ENCODE measurements at regions of chr12 and their contacts with region 1.

Region 1: DNA sequence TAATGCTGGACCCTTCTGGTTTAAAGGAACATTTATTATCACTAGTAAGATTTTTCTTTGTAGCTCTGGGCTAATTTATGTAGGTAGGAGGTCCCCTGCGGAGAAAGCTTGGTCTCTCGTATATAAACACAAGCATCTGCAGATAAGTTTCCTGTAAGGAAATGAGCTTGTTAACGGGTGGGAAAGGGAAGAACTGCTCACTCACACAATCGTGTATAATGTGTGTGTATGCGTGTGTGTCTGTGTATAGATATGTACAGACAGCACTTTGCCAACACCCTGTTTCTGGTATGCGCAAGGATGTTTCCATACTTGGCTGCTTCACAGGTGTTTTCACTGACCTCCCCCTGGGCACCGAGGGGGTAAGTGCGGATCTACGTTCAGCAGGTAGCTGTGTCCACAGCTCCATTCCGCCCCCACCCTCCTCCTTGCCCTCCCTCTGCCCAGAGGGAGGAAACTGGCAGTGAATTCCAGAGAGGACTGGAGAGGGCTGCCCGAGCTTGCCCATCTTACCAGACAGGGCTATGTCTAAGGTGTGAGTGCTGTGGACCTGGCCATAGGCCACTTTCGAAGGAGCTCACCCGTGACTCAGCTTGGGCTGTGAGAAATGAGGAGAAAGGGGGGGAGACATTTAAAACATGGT is 65.2 kb downstream of the NINJ2 start:
- DNase-seq: peak; percentile 92
- H3K4me3 Mint-ChIP-seq: peak overlapping the region; percentile 15
- H3K27ac Mint-ChIP-seq: peak overlapping the region; percentile 18
- H3K4me1 Mint-ChIP-seq: peaks cover 20% of the 10 kb centered on the region
- H3K27me3 Mint-ChIP-seq: no peaks in the 10 kb centered on the region
- CTCF ChIP-seq: no peak

Region 2: GRCh38 chr12:480831-481816 is 116.9 kb before region 1 on chr12:
- CTCF ChIA-PET with region 1: no interaction called
- POLR2A ChIA-PET with region 1: no interaction called
- intact Hi-C with region 1: no loop called
- DNase-seq: no peak
- H3K4me3 Mint-ChIP-seq: no peak overlapping the region
- H3K27ac Mint-ChIP-seq: no peak overlapping the region
- H3K4me1 Mint-ChIP-seq: no peaks in the 10 kb centered on the region
- H3K27me3 Mint-ChIP-seq: peaks cover 48% of the 10 kb centered on the region
- CTCF ChIP-seq: no peak

Region 3: GRCh38 chr12:575948-576612 is 22.0 kb before region 1 on chr12:
- CTCF ChIA-PET with region 1: interaction called, 23 read pairs
- POLR2A ChIA-PET with region 1: interaction called, 24 read pairs
- intact Hi-C with region 1: no loop called
- DNase-seq: peak; percentile 78
- H3K4me3 Mint-ChIP-seq: peak overlapping the region; percentile 35
- H3K27ac Mint-ChIP-seq: peak overlapping the region; percentile 91
- H3K4me1 Mint-ChIP-seq: peaks cover 44% of the 10 kb centered on the region
- H3K27me3 Mint-ChIP-seq: no peaks in the 10 kb centered on the region
- CTCF ChIP-seq: peak; percentile 99

Region 4: DNA sequence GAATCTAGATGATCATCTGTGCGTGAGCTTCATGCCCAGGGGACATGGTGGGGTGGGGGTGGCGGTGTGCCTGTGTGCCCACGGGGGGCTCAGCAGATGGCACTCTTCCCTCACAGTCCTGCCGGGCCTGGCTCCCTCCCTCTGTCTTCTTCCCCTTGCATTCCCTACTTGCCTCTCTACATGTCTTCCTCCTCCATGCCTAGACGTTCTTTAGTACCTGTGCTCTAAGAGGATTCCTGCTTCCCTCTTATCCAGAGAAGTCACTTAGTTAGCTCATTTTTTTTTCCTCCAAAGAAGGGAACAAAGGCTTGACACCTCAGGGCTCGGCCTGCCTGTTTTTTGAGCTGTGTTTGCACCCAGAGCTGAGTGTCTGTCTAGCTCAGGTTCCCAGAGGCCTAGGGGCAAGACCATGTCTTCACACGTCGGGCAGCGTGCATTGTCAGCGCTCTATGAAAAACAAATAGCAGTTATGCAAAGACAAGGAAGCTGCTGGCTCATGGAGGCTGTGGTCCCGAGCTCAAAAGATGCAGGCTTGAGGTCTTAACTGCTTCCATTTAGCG is 16.4 kb after region 1 on chr12:
- CTCF ChIA-PET with region 1: interaction called, 3 read pairs
- POLR2A ChIA-PET with region 1: interaction called, 11 read pairs
- intact Hi-C with region 1: no loop called
- DNase-seq: peak; percentile 14
- H3K4me3 Mint-ChIP-seq: no peak overlapping the region
- H3K27ac Mint-ChIP-seq: no peak overlapping the region
- H3K4me1 Mint-ChIP-seq: peaks cover 13% of the 10 kb centered on the region
- H3K27me3 Mint-ChIP-seq: no peaks in the 10 kb centered on the region
- CTCF ChIP-seq: no peak

Region 5: GRCh38 chr12:630656-631632 is 32.9 kb after region 1 on chr12:
- CTCF ChIA-PET with region 1: interaction called, 8 read pairs
- POLR2A ChIA-PET with region 1: interaction called, 11 read pairs
- intact Hi-C with region 1: no loop called
- DNase-seq: no peak
- H3K4me3 Mint-ChIP-seq: no peak overlapping the region
- H3K27ac Mint-ChIP-seq: peak overlapping the region; percentile 89
- H3K4me1 Mint-ChIP-seq: peaks cover 15% of the 10 kb centered on the region
- H3K27me3 Mint-ChIP-seq: no peaks in the 10 kb centered on the region
- CTCF ChIP-seq: no peak

Region 6: GRCh38 chr12:1034751-1035457 is 436.9 kb after region 1 on chr12:
- CTCF ChIA-PET with region 1: no interaction called
- POLR2A ChIA-PET with region 1: no interaction called
- intact Hi-C with region 1: no loop called
- DNase-seq: no peak
- H3K4me3 Mint-ChIP-seq: no peak overlapping the region
- H3K27ac Mint-ChIP-seq: no peak overlapping the region
- H3K4me1 Mint-ChIP-seq: no peaks in the 10 kb centered on the region
- H3K27me3 Mint-ChIP-seq: no peaks in the 10 kb centered on the region
- CTCF ChIP-seq: no peak